GM12878 (cell line): ENCODE measurements at regions of chr20 and their contacts with region 1.

Region 1: DNA sequence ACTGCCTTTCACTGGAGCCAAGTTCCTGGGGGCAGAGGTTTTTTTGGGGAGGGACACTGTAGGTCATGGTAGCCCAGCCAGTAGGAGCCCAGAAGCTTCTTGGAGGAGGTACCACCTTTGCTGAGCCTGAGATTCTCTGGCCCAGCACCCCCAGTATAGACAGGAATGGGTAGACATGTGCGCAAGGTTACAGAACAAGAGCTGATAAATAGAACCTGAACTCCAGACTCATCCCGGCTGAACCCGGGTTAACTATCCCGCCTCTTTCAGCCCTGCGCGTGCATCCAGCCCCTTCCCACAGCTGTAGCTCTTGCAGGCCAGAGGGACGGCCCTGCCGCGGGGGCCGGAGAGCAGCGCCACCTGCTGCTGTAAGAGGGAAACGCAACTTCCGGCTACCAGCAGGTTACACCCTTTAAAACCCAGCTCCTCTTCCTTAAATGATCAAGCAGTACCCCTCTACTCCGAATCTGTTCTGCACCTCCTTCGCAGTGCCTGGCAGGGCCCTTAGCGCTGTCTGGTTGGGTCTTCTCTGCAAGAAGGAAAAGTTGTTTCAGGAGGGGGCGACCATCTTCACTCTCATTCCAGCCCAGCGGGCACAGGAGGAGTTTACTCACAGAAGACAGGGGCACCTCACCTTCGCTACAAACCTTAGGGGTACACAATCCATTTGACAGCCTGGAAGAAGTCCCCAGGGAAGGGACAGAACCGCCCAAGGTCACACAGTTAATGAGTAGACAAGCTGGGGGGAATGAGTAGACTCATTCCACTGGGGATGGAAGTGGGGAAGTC is 7.5 kb downstream of the SRXN1 start:
- DNase-seq: peak; percentile 25
- ATAC-seq: peak; percentile 96
- H3K4me3 ChIP-seq: no peak overlapping the region
- H3K27ac ChIP-seq: 0 out of 2 replicates have a peak overlapping the region, but pooled peaks have one; percentile 7
- H3K4me1 ChIP-seq: no peaks in the 10 kb centered on the region
- H3K27me3 ChIP-seq: no peaks in the 10 kb centered on the region
- CTCF ChIP-seq: peak; percentile 93 to 99 (median 97)
- EP300 ChIP-seq: no peak
- POLR2A ChIP-seq: no peak; the same call in 1 of the 2 replicates
- RAD21 ChIP-seq: peak; percentile 86

Region 2: GRCh38 chr20:354298-355064 is 291.0 kb before region 1 on chr20:
- CTCF ChIA-PET with region 1: interaction called, 15 read pairs
- POLR2A ChIA-PET with region 1: no interaction called
- RAD21 ChIA-PET with region 1: interaction called, 8 read pairs
- SMC1A ChIA-PET with region 1: interaction called, 9 read pairs
- in situ Hi-C with region 1: loop called (anchors 5 kb)
- intact Hi-C with region 1: loop called (anchors 1 kb)
- DNase-seq: no peak
- ATAC-seq: peak; percentile 100
- H3K4me3 ChIP-seq: no peak overlapping the region
- H3K27ac ChIP-seq: no peak overlapping the region
- H3K4me1 ChIP-seq: no peaks in the 10 kb centered on the region
- H3K27me3 ChIP-seq: no peaks in the 10 kb centered on the region
- CTCF ChIP-seq: peak; percentile 92 to 98 (median 94)
- EP300 ChIP-seq: no peak
- POLR2A ChIP-seq: no peak
- RAD21 ChIP-seq: peak; percentile 95

Region 3: GRCh38 chr20:507761-508332 is 137.7 kb before region 1 on chr20:
- CTCF ChIA-PET with region 1: no interaction called
- POLR2A ChIA-PET with region 1: no interaction called
- RAD21 ChIA-PET with region 1: no interaction called
- SMC1A ChIA-PET with region 1: no interaction called
- in situ Hi-C with region 1: no loop called
- intact Hi-C with region 1: no loop called
- DNase-seq: no peak
- ATAC-seq: no peak
- H3K4me3 ChIP-seq: no peak overlapping the region
- H3K27ac ChIP-seq: no peak overlapping the region
- H3K4me1 ChIP-seq: no peaks in the 10 kb centered on the region
- H3K27me3 ChIP-seq: no peaks in the 10 kb centered on the region
- CTCF ChIP-seq: no peak
- EP300 ChIP-seq: no peak
- POLR2A ChIP-seq: no peak
- RAD21 ChIP-seq: no peak

Region 4: GRCh38 chr20:543369-544152 is 102.0 kb before region 1 on chr20 and contains the start of gene CSNK2A1:
- CTCF ChIA-PET with region 1: interaction called, 26 read pairs
- POLR2A ChIA-PET with region 1: no interaction called
- RAD21 ChIA-PET with region 1: interaction called, 5 read pairs
- SMC1A ChIA-PET with region 1: interaction called, 5 read pairs
- in situ Hi-C with region 1: no loop called
- intact Hi-C with region 1: no loop called
- DNase-seq: peak; percentile 94
- ATAC-seq: peak; percentile 96
- H3K4me3 ChIP-seq: peak within 1 kb of the TSS; percentile 88
- H3K27ac ChIP-seq: peak within 1 kb of the TSS; percentile 90
- H3K4me1 ChIP-seq: peaks cover 8% of the 10 kb centered on the region; the same call in 1 of the 2 replicates
- H3K27me3 ChIP-seq: no peaks in the 10 kb centered on the region
- CTCF ChIP-seq: no peak
- EP300 ChIP-seq: no peak
- POLR2A ChIP-seq: peak; percentile 98
- RAD21 ChIP-seq: no peak
- polyA plus RNA-seq, gene CSNK2A1: 47.6 to 56.5 TPM

Region 5: DNA sequence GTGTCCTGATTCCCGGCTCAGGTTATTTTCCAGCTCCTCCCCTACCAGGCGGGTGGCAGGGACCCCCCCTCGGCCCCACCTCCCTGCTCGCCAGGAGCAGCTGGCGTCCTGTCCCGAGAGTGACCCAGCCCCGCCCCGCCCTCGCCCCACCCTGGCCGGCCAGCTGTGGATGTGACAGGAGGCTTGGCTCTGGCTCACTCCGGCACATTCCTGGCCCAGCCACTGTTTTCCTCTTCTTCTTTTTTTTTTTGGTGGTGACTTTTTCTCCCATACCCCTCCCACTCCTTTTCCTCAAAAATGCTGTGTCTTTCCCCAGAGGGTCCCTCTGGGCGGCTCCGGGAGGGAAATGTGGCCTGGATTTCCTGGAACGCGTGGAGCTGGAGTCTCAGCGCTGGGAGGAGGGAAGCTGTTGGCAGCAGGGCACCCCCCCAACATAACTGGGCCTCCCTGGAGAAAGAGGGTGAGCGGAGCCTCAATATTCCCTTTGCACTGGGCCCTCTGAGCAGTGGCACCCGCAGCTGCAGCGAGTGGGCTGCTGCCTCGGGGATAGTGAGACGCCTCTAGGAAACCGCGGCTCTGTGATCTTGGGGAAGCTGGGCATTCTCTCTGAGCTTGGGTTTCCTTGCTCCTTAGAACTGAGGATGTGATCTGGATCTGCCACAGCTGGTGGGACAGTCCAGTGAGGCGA is 73.6 kb before region 1 on chr20:
- CTCF ChIA-PET with region 1: interaction called, 46 read pairs
- POLR2A ChIA-PET with region 1: no interaction called
- RAD21 ChIA-PET with region 1: interaction called, 5 read pairs
- SMC1A ChIA-PET with region 1: interaction called, 3 read pairs
- in situ Hi-C with region 1: no loop called
- intact Hi-C with region 1: loop called (anchors 5 kb)
- DNase-seq: no peak
- ATAC-seq: no peak
- H3K4me3 ChIP-seq: no peak overlapping the region
- H3K27ac ChIP-seq: no peak overlapping the region
- H3K4me1 ChIP-seq: no peaks in the 10 kb centered on the region
- H3K27me3 ChIP-seq: peaks cover 0 to 9% of the 10 kb centered on the region in 2 experiments; a peak in 2 of 4 replicates
- CTCF ChIP-seq: no peak
- EP300 ChIP-seq: no peak
- POLR2A ChIP-seq: no peak
- RAD21 ChIP-seq: no peak

Region 6: GRCh38 chr20:618980-619379 is 26.5 kb before region 1 on chr20:
- CTCF ChIA-PET with region 1: interaction called, 12 read pairs
- POLR2A ChIA-PET with region 1: no interaction called
- RAD21 ChIA-PET with region 1: no interaction called
- SMC1A ChIA-PET with region 1: interaction called, 6 read pairs
- in situ Hi-C with region 1: no loop called
- intact Hi-C with region 1: no loop called
- DNase-seq: no peak
- ATAC-seq: no peak
- H3K4me3 ChIP-seq: no peak overlapping the region
- H3K27ac ChIP-seq: no peak overlapping the region
- H3K4me1 ChIP-seq: peaks cover 6% of the 10 kb centered on the region; the same call in 1 of the 2 replicates
- H3K27me3 ChIP-seq: peaks cover 0 to 3% of the 10 kb centered on the region in 2 experiments; a peak in 2 of 4 replicates
- CTCF ChIP-seq: no peak
- EP300 ChIP-seq: no peak
- POLR2A ChIP-seq: no peak
- RAD21 ChIP-seq: no peak

Region 7: DNA sequence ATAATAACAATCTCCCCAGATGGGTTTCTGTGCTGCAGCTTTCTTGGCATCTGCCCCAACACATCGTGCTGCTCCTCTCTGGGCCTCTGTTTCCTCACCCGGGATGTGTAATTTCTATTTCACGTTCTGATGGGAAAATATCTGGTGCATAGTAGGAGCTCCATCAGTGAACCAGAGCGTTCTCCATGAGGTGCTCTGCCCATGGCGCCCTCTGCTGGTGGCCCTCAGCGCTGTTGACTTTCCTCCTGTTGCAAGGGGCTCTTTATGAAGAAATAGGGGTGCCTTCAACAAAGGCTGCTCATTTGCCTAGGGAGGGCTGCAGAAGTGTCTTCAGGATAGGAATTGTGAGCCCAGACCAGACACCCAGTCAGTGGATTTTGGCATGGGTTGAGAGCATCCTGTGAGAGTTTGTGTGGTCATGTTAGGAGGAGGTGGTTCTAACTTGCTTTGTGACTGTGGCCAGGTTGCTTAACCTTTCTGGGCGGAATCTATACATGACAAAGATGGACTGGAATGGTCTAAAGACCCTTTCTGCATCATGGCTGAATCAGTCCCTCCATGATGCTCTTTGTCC is 22.0 kb after region 1 on chr20:
- CTCF ChIA-PET with region 1: interaction called, 38 read pairs
- POLR2A ChIA-PET with region 1: no interaction called
- RAD21 ChIA-PET with region 1: interaction called, 10 read pairs
- SMC1A ChIA-PET with region 1: interaction called, 12 read pairs
- in situ Hi-C with region 1: no loop called
- intact Hi-C with region 1: no loop called
- DNase-seq: no peak
- ATAC-seq: peak; percentile 88
- H3K4me3 ChIP-seq: no peak overlapping the region
- H3K27ac ChIP-seq: no peak overlapping the region
- H3K4me1 ChIP-seq: no peaks in the 10 kb centered on the region
- H3K27me3 ChIP-seq: peaks cover 3 to 6% of the 10 kb centered on the region in 2 experiments; a peak in 3 of 4 replicates
- CTCF ChIP-seq: peak; percentile 82 to 92 (median 88)
- EP300 ChIP-seq: no peak
- POLR2A ChIP-seq: no peak
- RAD21 ChIP-seq: peak; percentile 58